Natural killer cell (primary cell): ENCODE measurements at regions of chr12 and their contacts with region 1.

Region 1: DNA sequence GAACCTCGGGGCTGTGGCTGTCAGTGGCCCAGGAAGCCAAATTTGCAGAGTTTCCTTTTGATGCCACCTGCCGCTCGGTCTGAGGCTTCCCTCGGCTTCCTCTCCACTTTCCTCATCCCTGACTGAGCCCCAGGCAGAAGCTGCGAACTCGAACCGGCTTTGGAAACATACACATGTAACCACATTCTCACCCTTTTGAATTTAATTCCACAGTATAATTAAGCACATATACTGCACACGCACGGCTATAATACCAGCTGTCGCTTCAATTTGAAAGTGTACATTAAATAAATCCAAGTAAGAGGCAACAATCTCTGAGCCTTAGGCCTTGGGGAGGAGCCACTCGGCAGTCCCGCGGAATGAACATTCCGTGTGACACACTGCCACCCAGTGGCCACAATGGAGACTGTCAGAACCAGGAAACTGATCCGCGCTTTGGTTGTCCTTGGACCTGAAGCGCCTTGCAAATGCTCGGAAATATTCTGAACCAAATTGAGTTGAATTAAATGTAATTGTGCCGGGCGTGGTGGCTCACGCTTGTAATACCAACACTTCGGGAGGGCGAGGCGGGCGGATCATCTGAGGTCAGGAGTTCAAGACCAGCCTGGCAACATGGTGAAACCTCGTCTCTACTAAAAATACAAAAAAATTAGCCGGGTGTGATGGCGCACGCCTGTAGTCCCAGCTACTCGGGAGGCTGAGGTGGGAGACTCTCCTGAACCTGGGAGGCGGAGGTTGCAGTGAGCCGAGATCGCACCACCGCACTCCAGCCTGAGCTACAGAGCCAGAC is 117.9 kb upstream of the TMPO start:
- DNase-seq: peak; percentile 69 to 90
- ATAC-seq: peak; percentile 91 to 97 (median 95)
- H3K4me3 ChIP-seq: peak overlapping the region; percentile 20
- H3K4me3 Mint-ChIP-seq: peak overlapping the region; percentile 94
- H3K27ac ChIP-seq: peak overlapping the region; percentile 5
- H3K27ac Mint-ChIP-seq: peak overlapping the region; percentile 57 to 82
- H3K4me1 ChIP-seq: peaks cover 21% of the 10 kb centered on the region
- H3K4me1 Mint-ChIP-seq: peaks cover 21 to 23% of the 10 kb centered on the region in 2 donors
- H3K27me3 ChIP-seq: no peaks in the 10 kb centered on the region
- H3K27me3 Mint-ChIP-seq: peaks cover 3 to 6% of the 10 kb centered on the region in 2 donors
- CTCF ChIP-seq: peak; percentile 82

Region 2: DNA sequence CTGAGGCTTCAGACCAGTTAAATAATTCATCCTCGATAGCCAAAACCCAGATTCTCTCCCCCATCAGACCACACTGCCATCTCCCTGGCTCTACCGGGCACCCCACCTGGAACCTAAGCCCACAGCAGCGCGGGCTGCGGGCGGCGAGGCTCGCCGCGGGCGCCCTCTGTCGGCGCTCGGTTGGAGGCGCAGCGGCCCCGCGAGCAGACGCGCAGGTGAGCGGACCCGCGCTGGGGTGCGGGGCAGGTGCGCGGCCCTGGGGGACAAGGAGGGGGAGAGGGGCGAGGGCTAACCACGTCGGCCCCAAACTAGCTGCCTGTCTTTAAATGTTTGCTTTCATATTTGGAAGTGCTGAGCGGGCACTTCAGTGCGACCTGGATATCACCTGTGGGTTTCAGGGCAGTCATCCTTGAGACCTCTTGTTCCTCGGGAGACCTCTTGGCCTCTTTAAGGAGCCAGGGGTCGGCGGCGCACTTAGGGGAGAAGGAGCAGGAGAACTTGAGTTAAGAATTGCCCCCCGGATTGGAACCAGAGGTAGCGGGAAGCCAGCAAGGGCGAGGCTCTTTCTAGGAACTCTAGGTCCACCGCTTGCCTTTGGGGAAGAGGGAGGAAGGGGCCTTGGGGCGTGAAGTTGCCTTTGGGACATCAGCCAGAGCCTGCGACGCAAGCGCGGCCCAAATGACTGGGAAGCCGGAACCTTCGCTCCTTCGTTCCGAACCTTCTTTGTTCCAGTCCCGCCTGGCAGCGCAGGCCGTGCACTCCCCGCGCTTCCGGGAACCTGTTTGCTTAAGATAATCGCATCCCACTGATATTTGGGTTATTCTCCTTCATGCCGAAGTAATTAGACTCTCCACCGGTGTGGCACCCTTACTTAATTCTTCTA is 1411.8 kb before region 1 on chr12:
- intact Hi-C with region 1: loop called (anchors 10 kb)
- DNase-seq: peak; percentile 33 to 70
- ATAC-seq: peak; percentile 78 to 93 (median 84)
- H3K4me3 ChIP-seq: peak overlapping the region; percentile 11
- H3K4me3 Mint-ChIP-seq: peak overlapping the region; percentile 75
- H3K27ac ChIP-seq: no peak overlapping the region
- H3K27ac Mint-ChIP-seq: no peak overlapping the region
- H3K4me1 ChIP-seq: peaks cover 7% of the 10 kb centered on the region
- H3K4me1 Mint-ChIP-seq: peaks cover 9 to 10% of the 10 kb centered on the region in 2 donors
- H3K27me3 ChIP-seq: peaks cover 21% of the 10 kb centered on the region
- H3K27me3 Mint-ChIP-seq: peaks cover 25 to 48% of the 10 kb centered on the region in 2 donors
- CTCF ChIP-seq: peak; percentile 81

Region 3: GRCh38 chr12:97148941-97149559 is 1248.5 kb before region 1 on chr12:
- intact Hi-C with region 1: loop called (anchors 1 kb)
- DNase-seq: peak in 1 of 2 donors; percentile 54
- ATAC-seq: peak; percentile 53 to 85 (median 66)
- H3K4me3 ChIP-seq: no peak overlapping the region
- H3K4me3 Mint-ChIP-seq: no peak overlapping the region
- H3K27ac ChIP-seq: no peak overlapping the region
- H3K27ac Mint-ChIP-seq: no peak overlapping the region
- H3K4me1 ChIP-seq: no peaks in the 10 kb centered on the region
- H3K4me1 Mint-ChIP-seq: no peaks in the 10 kb centered on the region
- H3K27me3 ChIP-seq: no peaks in the 10 kb centered on the region
- H3K27me3 Mint-ChIP-seq: peaks cover 4 to 15% of the 10 kb centered on the region in 2 donors
- CTCF ChIP-seq: peak; percentile 34

Region 4: DNA sequence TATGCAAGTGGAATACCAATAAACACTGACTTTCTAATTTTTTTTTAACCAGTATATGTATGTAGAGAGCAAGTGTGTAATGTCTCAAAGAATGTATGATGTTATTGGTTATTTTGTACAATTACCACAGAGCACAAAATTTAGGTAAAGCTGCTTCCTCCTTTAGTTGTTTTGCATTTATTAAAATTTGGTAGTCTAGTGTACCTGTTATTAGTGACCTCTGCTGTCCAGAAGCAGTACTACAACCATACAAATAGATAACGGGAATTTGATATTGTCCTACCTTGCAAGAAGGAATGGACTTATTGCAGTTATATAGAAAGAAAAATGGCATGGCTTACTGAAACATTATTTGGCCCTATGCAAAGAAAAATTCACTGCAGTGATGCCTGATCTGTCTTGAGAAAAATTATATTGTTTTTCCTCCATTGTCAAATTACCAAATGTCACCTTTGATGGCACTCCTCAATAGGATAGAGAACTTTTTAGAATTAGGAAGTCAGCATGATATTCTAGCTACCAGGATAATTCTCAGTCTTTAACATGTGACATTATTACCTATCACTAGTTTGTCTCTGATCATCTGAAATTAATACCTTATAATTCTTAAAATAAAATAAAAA is 1088.8 kb before region 1 on chr12:
- intact Hi-C with region 1: loop called (anchors 5 kb)
- DNase-seq: peak in 1 of 2 donors; percentile 77
- ATAC-seq: peak in 2 of 3 donors; percentile 49 to 71
- H3K4me3 ChIP-seq: no peak overlapping the region
- H3K4me3 Mint-ChIP-seq: no peak overlapping the region
- H3K27ac ChIP-seq: no peak overlapping the region
- H3K27ac Mint-ChIP-seq: no peak overlapping the region
- H3K4me1 ChIP-seq: no peaks in the 10 kb centered on the region
- H3K4me1 Mint-ChIP-seq: no peaks in the 10 kb centered on the region
- H3K27me3 ChIP-seq: no peaks in the 10 kb centered on the region
- H3K27me3 Mint-ChIP-seq: peaks cover 14 to 15% of the 10 kb centered on the region in 2 donors
- CTCF ChIP-seq: peak; percentile 77

Region 5: GRCh38 chr12:98121963-98122362 is 275.5 kb before region 1 on chr12:
- intact Hi-C with region 1: no loop called
- DNase-seq: no peak
- ATAC-seq: no peak
- H3K4me3 ChIP-seq: no peak overlapping the region
- H3K4me3 Mint-ChIP-seq: no peak overlapping the region
- H3K27ac ChIP-seq: no peak overlapping the region
- H3K27ac Mint-ChIP-seq: no peak overlapping the region
- H3K4me1 ChIP-seq: peaks cover 3% of the 10 kb centered on the region
- H3K4me1 Mint-ChIP-seq: peaks cover 8 to 10% of the 10 kb centered on the region in 2 donors
- H3K27me3 ChIP-seq: no peaks in the 10 kb centered on the region
- H3K27me3 Mint-ChIP-seq: peaks cover 4 to 6% of the 10 kb centered on the region in 2 donors
- CTCF ChIP-seq: no peak

Region 6: GRCh38 chr12:98369581-98369980 is 27.9 kb before region 1 on chr12:
- intact Hi-C with region 1: no loop called
- DNase-seq: no peak
- ATAC-seq: no peak
- H3K4me3 ChIP-seq: no peak overlapping the region
- H3K4me3 Mint-ChIP-seq: no peak overlapping the region
- H3K27ac ChIP-seq: no peak overlapping the region
- H3K27ac Mint-ChIP-seq: no peak overlapping the region
- H3K4me1 ChIP-seq: no peaks in the 10 kb centered on the region
- H3K4me1 Mint-ChIP-seq: peaks cover 11% of the 10 kb centered on the region in 2 donors
- H3K27me3 ChIP-seq: peaks cover 2% of the 10 kb centered on the region
- H3K27me3 Mint-ChIP-seq: peaks cover 20 to 34% of the 10 kb centered on the region in 2 donors
- CTCF ChIP-seq: no peak